ENCODE measurements at regions of chr6 and their contacts with region 1.

Region 1: GRCh38 chr6:80004173-80005072 is at the start of gene TTK:
- DNase-seq: peak; percentile 94
- ATAC-seq: peak; percentile 100
- H3K4me3 ChIP-seq: peak within 1 kb of the TSS; percentile 26 to 93 (median 84)
- H3K4me3 Mint-ChIP-seq: peak within 1 kb of the TSS; percentile 92
- H3K27ac ChIP-seq: peak within 1 kb of the TSS; percentile 39 to 57
- H3K27ac Mint-ChIP-seq: peak within 1 kb of the TSS; percentile 70
- H3K4me1 ChIP-seq: peaks cover 12 to 13% of the 10 kb centered on the region in 2 donors
- H3K4me1 Mint-ChIP-seq: peaks cover 21% of the 10 kb centered on the region
- H3K27me3 ChIP-seq: no peaks in the 10 kb centered on the region
- H3K27me3 Mint-ChIP-seq: no peaks in the 10 kb centered on the region
- CTCF ChIP-seq: no peak
- total RNA-seq, gene TTK: 0.68 and 0.84 TPM in 2 replicates

Region 2: GRCh38 chr6:78867370-78868040 is 1136.9 kb before region 1 on chr6 and contains the start of gene IRAK1BP1:
- CTCF ChIA-PET with region 1: no interaction called
- POLR2A ChIA-PET with region 1: no interaction called
- intact Hi-C with region 1: loop called (anchors 5 kb)
- DNase-seq: peak; percentile 91
- ATAC-seq: peak; percentile 94
- H3K4me3 ChIP-seq: peak within 1 kb of the TSS; percentile 58 to 94 (median 92)
- H3K4me3 Mint-ChIP-seq: peak within 1 kb of the TSS; percentile 98
- H3K27ac ChIP-seq: peak within 1 kb of the TSS; percentile 69 to 91
- H3K27ac Mint-ChIP-seq: peak within 1 kb of the TSS; percentile 97
- H3K4me1 ChIP-seq: peaks cover 9 to 13% of the 10 kb centered on the region in 2 donors
- H3K4me1 Mint-ChIP-seq: peaks cover 23% of the 10 kb centered on the region
- H3K27me3 ChIP-seq: no peaks in the 10 kb centered on the region
- H3K27me3 Mint-ChIP-seq: no peaks in the 10 kb centered on the region
- CTCF ChIP-seq: peak; percentile 18
- total RNA-seq, gene IRAK1BP1: 3.0 and 3.2 TPM in 2 replicates

Region 3: DNA sequence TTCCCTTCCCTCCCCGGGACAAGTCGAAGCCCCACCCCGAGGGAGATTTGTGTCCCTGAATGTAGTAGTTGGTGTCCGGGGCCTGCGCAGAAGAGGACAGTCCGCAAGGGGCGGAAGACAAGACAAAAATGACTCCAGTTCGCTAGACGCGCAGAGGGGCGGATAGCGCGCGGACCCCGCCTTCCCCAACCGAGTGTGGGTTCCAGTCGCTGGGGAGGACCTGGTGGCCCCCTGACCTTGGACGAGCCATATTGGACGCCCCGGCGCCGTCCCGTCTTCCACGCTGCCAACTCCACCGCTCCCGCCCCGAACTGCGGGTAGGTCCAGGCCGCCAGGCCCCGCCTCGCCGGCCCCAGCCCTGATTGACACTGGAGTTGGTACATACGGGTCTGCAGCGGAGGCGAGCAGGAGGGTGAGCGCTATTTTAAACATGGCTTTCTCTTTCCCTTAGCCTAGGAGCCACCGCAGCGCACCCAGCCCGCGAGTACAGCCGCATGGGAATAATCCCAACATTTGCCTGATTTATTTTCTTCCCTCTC is 770.7 kb before region 1 on chr6:
- CTCF ChIA-PET with region 1: no interaction called
- POLR2A ChIA-PET with region 1: no interaction called
- intact Hi-C with region 1: loop called (anchors 2 kb)
- DNase-seq: peak; percentile 75
- ATAC-seq: peak; percentile 35
- H3K4me3 ChIP-seq: peak overlapping the region; percentile 87 to 97 (median 93)
- H3K4me3 Mint-ChIP-seq: peak overlapping the region; percentile 95
- H3K27ac ChIP-seq: peak overlapping the region; percentile 52 to 66
- H3K27ac Mint-ChIP-seq: peak overlapping the region; percentile 90
- H3K4me1 ChIP-seq: peaks cover 5 to 7% of the 10 kb centered on the region in 2 donors
- H3K4me1 Mint-ChIP-seq: peaks cover 19% of the 10 kb centered on the region
- H3K27me3 ChIP-seq: no peaks in the 10 kb centered on the region
- H3K27me3 Mint-ChIP-seq: no peaks in the 10 kb centered on the region
- CTCF ChIP-seq: peak; percentile 27

Region 4: DNA sequence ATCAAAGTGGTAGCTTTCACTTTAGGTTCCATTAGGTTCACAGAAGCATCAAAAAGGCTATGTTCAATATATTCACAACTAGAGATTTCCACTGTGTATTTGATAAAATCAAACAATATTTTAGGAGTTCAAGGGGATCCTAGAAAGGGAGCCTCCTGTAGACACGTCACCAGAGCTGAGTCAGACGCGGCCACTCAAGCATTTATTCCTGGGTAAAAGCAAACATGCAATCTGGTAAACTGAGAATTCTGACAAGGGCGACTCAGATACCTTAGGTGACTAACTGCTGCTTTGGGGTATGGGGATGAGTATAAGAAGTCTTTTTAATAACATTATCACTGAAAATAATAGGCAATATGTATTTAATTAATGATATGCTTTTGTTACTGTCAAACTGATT is 651.2 kb before region 1 on chr6:
- CTCF ChIA-PET with region 1: no interaction called
- POLR2A ChIA-PET with region 1: no interaction called
- intact Hi-C with region 1: no loop called
- DNase-seq: no peak
- ATAC-seq: no peak
- H3K4me3 ChIP-seq: no peak overlapping the region
- H3K4me3 Mint-ChIP-seq: no peak overlapping the region
- H3K27ac ChIP-seq: no peak overlapping the region
- H3K27ac Mint-ChIP-seq: no peak overlapping the region
- H3K4me1 ChIP-seq: no peaks in the 10 kb centered on the region
- H3K4me1 Mint-ChIP-seq: no peaks in the 10 kb centered on the region
- H3K27me3 ChIP-seq: no peaks in the 10 kb centered on the region
- H3K27me3 Mint-ChIP-seq: no peaks in the 10 kb centered on the region
- CTCF ChIP-seq: no peak

Region 5: DNA sequence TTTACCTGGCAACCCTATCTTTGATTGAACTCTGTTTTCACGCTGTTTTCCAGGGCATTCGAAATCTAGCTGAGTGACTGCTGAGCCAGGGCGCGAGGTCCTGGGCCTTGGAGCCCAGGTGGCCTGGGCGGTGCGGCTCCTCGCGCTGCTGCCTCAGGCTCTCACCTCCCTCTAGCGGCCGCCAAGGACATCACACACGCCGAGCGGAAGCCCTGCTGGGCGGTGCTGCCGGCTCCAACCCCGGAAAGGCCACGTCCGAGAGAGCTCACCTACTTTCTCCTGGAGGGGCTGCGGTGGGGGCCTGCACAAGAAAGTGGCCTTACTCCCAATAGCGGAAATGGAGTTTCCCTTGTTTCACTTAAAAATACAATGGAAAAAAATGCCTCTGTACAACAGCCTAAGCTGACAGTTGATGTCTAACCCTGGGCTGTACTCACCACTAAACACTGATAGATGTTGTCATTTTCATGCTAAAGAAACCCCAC is 134.8 kb before region 1 on chr6:
- CTCF ChIA-PET with region 1: no interaction called
- POLR2A ChIA-PET with region 1: no interaction called
- intact Hi-C with region 1: loop called (anchors 5 kb)
- DNase-seq: peak; percentile 83
- ATAC-seq: peak; percentile 100
- H3K4me3 ChIP-seq: peak overlapping the region in 3 of 5 experiments; percentile 27 to 52 (median 38)
- H3K4me3 Mint-ChIP-seq: peak overlapping the region; percentile 61
- H3K27ac ChIP-seq: no peak overlapping the region
- H3K27ac Mint-ChIP-seq: peak overlapping the region; percentile 59
- H3K4me1 ChIP-seq: peaks cover 4 to 9% of the 10 kb centered on the region in 2 donors
- H3K4me1 Mint-ChIP-seq: peaks cover 7% of the 10 kb centered on the region
- H3K27me3 ChIP-seq: peaks cover 0 to 8% (median 0%) of the 10 kb centered on the region in 4 experiments
- H3K27me3 Mint-ChIP-seq: peaks cover 4% of the 10 kb centered on the region
- CTCF ChIP-seq: peak; percentile 98

Region 6: DNA sequence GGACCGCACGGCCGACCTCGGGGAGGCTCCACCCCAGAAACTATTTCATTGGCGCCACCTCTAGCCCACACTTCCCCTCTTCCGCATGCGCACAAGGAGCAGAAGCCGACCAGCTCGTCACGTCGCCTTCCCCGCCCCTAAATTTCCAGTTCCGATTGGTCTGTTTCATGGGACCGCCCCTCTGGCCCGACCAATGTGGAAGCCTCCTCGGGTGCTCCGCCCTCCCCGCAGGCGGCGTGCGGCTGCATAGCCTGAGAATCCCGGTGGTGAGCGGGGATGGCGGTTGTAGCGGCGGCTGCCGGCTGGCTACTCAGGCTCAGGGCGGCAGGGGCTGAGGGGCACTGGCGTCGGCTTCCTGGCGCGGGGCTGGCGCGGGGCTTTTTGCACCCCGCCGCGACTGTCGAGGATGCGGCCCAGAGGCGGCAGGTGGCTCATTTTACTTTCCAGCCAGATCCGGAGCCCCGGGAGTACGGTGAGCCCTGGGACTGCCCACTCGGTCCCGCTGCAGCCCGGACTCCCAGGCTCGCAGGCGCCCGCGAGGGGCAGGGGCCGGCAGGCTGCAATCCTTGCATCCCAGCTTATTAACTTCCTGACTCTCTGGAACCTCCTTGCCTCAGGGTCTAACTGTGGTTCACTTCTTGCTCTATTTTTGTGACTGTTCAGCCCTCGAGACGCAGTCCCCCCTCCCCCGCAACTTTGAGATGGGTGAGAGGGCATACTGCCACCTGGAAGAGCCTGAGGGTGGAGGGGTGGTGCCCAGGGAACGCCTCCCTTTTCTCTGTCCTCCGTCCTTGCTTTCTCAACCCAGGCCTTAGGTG is 102.2 kb after region 1 on chr6 and contains the start of gene BCKDHB:
- CTCF ChIA-PET with region 1: no interaction called
- POLR2A ChIA-PET with region 1: no interaction called
- intact Hi-C with region 1: loop called (anchors 1 kb)
- DNase-seq: peak; percentile 99
- ATAC-seq: peak; percentile 98
- H3K4me3 ChIP-seq: peak within 1 kb of the TSS; percentile 52 to 93 (median 83)
- H3K4me3 Mint-ChIP-seq: peak within 1 kb of the TSS; percentile 93
- H3K27ac ChIP-seq: peak within 1 kb of the TSS in 1 of 2 donors; percentile 67
- H3K27ac Mint-ChIP-seq: peak within 1 kb of the TSS; percentile 91
- H3K4me1 ChIP-seq: peaks cover 4 to 12% of the 10 kb centered on the region in 2 donors
- H3K4me1 Mint-ChIP-seq: peaks cover 13% of the 10 kb centered on the region
- H3K27me3 ChIP-seq: peaks cover 0 to 19% (median 5%) of the 10 kb centered on the region in 4 experiments
- H3K27me3 Mint-ChIP-seq: peaks cover 11% of the 10 kb centered on the region
- CTCF ChIP-seq: no peak
- total RNA-seq, gene BCKDHB: 20.1 and 21.4 TPM in 2 replicates